Activated CD8-positive, alpha-beta memory T cell treated with anti-CD3 and anti-CD28 coated beads, Interleukin-2, amount 10 ng/mL, durations not matched to agents 7 days and 5 days (primary cell): ENCODE measurements at regions of chr1 and their contacts with region 1.

Region 1: GRCh38 chr1:18902523-18903290 is at the start of gene ALDH4A1:
- DNase-seq: peak; percentile 98
- ATAC-seq: peak; percentile 99
- H3K4me3 Mint-ChIP-seq: peak within 1 kb of the TSS; percentile 92
- H3K27ac Mint-ChIP-seq: peak within 1 kb of the TSS; percentile 97
- H3K4me1 Mint-ChIP-seq: peaks cover 19% of the 10 kb centered on the region
- H3K27me3 Mint-ChIP-seq: no peaks in the 10 kb centered on the region
- total RNA-seq, gene ALDH4A1: 4.5 to 5.8 TPM

Region 2: GRCh38 chr1:18926315-18927081 is 23.8 kb after region 1 on chr1:
- CTCF ChIA-PET with region 1: interaction called, 23 read pairs
- DNase-seq: peak; percentile 96
- ATAC-seq: peak; percentile 89
- H3K4me3 Mint-ChIP-seq: peak overlapping the region; percentile 77
- H3K27ac Mint-ChIP-seq: peak overlapping the region; percentile 99
- H3K4me1 Mint-ChIP-seq: peaks cover 66% of the 10 kb centered on the region
- H3K27me3 Mint-ChIP-seq: no peaks in the 10 kb centered on the region

Region 3: DNA sequence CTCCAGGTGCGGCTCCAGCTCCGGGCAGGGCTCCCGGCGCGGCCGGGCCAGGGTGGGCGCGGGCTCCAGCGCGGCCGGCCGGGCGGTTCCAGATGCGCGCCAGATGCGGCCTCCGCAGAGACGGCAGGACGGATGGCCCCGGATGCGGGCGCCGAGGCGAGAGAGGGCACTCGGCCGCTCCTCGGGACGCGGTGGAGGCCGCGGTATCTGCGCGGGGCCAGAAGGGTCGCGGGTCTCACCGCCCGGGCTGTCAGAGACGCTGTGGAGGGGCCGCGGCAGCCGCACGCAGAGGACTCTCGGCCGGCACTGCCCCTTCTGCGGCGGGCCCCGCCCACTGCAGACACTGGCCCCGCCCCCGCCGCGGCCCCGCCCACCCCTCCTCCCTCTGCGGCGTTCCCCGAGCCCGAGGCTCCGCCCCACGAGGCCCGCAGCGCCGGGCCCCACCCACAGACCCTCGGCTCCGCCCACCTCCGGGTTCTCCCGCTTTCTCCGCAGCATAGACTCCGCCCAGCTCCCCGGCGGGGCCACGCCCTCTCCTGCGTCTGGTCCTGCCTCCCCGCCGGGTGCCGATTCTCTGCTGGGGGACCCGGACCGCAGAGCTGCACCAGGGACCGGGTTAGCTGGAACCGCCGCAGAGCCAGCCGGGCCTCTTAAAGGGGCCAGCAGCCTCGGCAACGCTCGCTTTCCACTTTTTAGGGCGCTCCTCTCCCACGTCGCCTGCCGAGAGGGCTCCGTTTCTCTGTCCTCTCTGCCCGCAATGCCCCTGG is 53.8 kb after region 1 on chr1 and contains the start of gene IFFO2:
- CTCF ChIA-PET with region 1: interaction called, 21 read pairs
- DNase-seq: peak; percentile 97
- ATAC-seq: peak; percentile 81
- H3K4me3 Mint-ChIP-seq: peak within 1 kb of the TSS; percentile 78
- H3K27ac Mint-ChIP-seq: peak within 1 kb of the TSS; percentile 57
- H3K4me1 Mint-ChIP-seq: peaks cover 50% of the 10 kb centered on the region
- H3K27me3 Mint-ChIP-seq: peaks cover 43% of the 10 kb centered on the region
- total RNA-seq, gene IFFO2: 12.5 to 13.7 TPM

Region 4: GRCh38 chr1:19074902-19075721 is 172.4 kb after region 1 on chr1:
- CTCF ChIA-PET with region 1: interaction called, 39 read pairs
- DNase-seq: no peak
- ATAC-seq: peak; percentile 34
- H3K4me3 Mint-ChIP-seq: no peak overlapping the region
- H3K27ac Mint-ChIP-seq: peak overlapping the region; percentile 70
- H3K4me1 Mint-ChIP-seq: peaks cover 31% of the 10 kb centered on the region
- H3K27me3 Mint-ChIP-seq: no peaks in the 10 kb centered on the region

Region 5: DNA sequence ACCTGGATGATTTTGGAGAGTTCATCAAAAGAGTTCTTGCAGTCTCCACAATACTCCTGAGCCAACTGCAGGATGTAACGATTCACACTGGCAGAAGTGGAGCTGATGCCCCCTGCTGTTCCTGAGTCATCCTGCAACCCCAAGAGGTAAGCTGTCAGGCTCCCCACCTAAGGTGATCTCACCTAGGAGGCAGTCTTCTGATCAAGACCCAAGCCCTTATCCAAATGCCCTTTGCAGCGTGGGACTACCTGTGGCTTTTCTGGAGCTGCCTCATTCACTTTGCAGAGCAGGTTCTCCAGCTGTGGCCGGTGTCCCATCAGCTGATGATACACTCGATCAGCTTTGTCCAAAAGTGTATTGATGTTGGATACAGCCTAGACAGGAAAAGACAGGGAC is 211.0 kb after region 1 on chr1:
- CTCF ChIA-PET with region 1: interaction called, 27 read pairs
- DNase-seq: peak; percentile 63
- ATAC-seq: peak; percentile 68
- H3K4me3 Mint-ChIP-seq: no peak overlapping the region
- H3K27ac Mint-ChIP-seq: no peak overlapping the region
- H3K4me1 Mint-ChIP-seq: no peaks in the 10 kb centered on the region
- H3K27me3 Mint-ChIP-seq: no peaks in the 10 kb centered on the region